ENCODE measurements at regions of chr6 and their contacts with region 1.

Region 1: DNA sequence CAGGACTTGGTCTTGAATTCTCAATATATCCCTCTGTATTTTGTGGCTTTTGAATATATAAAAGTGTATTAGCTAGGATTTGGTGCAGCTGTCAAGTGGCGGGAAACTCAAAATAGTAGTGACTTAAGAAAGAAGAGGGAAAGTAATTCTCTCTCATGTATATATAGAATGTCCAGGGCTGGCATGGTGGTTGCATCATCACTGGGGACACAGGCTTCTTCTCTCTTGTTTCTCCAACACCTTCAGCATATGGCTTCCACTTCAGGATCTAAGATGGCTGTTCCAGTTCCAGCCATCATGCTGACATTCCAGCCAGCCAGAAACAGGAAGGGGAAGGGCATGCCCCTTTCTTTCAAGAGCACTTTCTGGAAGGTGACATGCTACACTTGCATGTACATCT is 11.8 kb upstream of the GPR6 start:
- DNase-seq: no peak
- ATAC-seq: no peak
- H3K4me3 Mint-ChIP-seq: no peak overlapping the region
- H3K27ac Mint-ChIP-seq: no peak overlapping the region
- H3K4me1 Mint-ChIP-seq: no peaks in the 10 kb centered on the region
- H3K27me3 Mint-ChIP-seq: no peaks in the 10 kb centered on the region
- CTCF ChIP-seq: no peak

Region 2: DNA sequence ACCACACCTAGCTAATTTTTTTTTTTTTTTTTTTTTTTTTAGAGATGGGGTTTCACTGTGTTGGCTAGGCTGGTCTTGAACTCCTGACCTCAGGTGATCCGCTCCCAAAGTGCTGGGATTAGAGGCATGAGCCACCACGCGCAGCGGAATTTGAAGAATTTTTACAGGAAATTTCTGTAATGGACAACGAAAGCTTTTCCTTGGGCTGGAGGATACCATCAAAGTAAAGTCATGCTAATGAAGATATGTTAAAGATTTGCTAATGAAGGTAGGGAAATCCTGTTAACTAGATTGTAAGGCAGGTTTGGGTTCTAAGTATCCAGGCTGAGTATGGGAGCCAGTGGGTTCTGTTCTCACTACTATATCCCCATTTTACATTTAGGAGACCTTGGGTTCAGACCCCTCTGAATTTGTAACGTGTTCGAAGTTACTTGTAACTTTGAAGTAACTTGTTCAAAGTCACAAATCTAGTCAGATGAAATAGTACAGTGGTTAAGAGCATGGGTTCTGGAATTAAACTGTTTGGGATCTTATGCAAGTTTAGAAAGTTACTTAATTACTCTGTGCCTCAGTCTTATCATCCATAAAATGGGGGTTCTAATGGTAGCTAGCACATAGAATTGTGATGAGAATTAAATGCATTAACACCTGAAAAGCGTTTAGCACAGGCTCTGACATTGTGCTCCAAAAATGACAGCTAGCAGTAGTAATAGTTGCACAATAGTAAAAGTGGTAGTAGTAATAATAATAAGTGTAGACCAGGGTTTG is 111.6 kb before region 1 on chr6:
- CTCF ChIA-PET with region 1: no interaction called
- POLR2A ChIA-PET with region 1: no interaction called
- intact Hi-C with region 1: no loop called
- DNase-seq: no peak
- ATAC-seq: no peak
- H3K4me3 Mint-ChIP-seq: no peak overlapping the region
- H3K27ac Mint-ChIP-seq: no peak overlapping the region
- H3K4me1 Mint-ChIP-seq: no peaks in the 10 kb centered on the region
- H3K27me3 Mint-ChIP-seq: no peaks in the 10 kb centered on the region
- CTCF ChIP-seq: no peak

Region 3: GRCh38 chr6:109867009-109867969 is 99.0 kb before region 1 on chr6:
- CTCF ChIA-PET with region 1: no interaction called
- POLR2A ChIA-PET with region 1: interaction called, 13 read pairs
- intact Hi-C with region 1: no loop called
- DNase-seq: no peak
- ATAC-seq: no peak
- H3K4me3 Mint-ChIP-seq: no peak overlapping the region
- H3K27ac Mint-ChIP-seq: no peak overlapping the region
- H3K4me1 Mint-ChIP-seq: no peaks in the 10 kb centered on the region
- H3K27me3 Mint-ChIP-seq: peaks cover 15% of the 10 kb centered on the region
- CTCF ChIP-seq: no peak

Measured in activated B cell treated with CpG ODN at 0.5 μM for 24 hours (primary cell).